Motor neuron (in vitro differentiated cells): ENCODE measurements at regions of chr20 and their contacts with region 1.

Region 1: DNA sequence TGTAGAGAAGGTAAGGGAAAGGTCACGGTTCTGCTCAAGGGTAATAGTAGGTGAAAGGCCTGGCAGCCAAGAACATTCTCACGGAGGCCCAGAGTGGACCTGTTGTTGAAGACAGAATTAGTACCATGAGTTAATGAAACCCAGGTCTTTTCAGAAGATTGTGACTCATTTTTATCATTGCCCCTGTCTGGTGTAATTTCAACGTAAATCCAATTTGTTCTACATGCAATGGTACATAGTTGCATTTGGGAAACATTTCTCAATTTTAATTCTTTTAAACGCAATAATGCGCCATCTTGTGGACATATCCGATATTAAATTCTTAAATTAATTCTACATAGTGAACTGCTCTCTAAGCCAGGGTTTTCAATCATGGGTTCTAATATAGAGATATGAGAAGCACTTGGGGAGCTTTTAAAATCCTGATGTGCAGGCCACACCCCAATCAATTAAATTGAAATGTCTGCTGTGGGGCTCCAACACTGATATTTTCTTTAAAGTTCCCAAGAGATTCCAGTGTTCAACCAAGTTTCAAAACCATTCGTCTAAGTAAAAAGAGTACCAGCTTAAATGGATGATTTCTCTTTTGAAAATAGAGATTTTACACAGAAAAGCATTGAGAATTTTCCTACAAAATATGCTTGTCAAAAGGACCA is 257.4 kb downstream of the PLCB1 start:
- ATAC-seq: peak in 3 of 8 experiments; percentile 22 to 40 (median 36)
- H3K4me3 ChIP-seq: no peak overlapping the region
- H3K27ac ChIP-seq: no peak overlapping the region
- H3K4me1 ChIP-seq: peaks cover 12 to 20% of the 10 kb centered on the region in 2 donors

Region 2: DNA sequence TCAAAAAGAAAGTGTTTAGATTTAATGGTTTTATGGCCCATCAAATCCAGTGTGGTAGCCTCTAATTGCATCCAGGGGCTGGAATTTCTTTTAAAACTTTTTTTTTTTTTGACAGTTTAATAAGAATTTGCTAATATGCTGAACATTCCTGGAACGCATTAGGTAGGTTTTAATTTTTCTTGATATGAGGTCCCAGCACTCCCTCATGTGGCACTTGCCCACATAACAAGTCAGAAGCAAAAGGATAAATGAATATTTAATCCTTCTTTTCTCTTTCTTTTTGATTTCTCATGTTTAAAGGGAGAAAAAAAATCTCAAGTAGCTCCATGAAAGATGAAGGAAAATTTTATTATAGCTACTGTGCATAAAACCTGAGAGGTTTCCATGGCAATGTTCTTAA is 462.7 kb before region 1 on chr20:
- in situ Hi-C with region 1: loop called in 1 of 9 experiments (anchors 25 kb)
- ATAC-seq: peak in 2 of 8 experiments; percentile 29 to 38
- H3K4me3 ChIP-seq: no peak overlapping the region
- H3K27ac ChIP-seq: no peak overlapping the region
- H3K4me1 ChIP-seq: no peaks in the 10 kb centered on the region

Region 3: DNA sequence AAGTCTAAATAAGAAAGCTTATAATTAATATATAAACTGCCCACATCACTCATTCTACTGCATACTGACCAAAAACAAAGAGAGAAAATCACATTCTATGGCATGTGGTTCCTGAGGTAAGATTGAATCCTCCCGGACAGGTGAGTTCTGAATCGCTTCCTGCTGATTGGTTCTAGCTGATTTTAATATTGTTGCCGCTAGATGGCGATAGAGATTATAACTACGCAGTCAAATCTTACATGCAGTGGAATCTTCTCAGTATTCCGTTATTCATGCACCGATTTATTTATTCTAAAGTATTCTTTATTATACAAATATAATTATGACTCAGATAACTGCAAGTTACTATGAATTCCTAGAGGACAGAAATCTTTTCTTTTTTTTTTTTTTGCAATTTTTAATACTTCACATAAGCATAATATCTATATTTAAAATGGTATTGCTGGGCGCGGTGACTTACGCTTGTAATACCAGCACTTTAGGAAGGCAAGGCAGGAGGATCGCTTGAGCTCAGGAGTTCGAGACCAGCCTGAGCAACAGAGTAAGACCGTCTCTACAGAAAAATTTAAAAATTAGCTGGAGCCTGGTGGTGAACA is 345.7 kb before region 1 on chr20:
- in situ Hi-C with region 1: loop called in 1 of 9 experiments (anchors 25 kb)
- ATAC-seq: peak; percentile 43 to 96 (median 62)
- H3K4me3 ChIP-seq: no peak overlapping the region
- H3K27ac ChIP-seq: no peak overlapping the region
- H3K4me1 ChIP-seq: no peaks in the 10 kb centered on the region

Region 4: GRCh38 chr20:8131598-8132483 is 257.7 kb before region 1 on chr20 and contains the start of gene PLCB1:
- in situ Hi-C with region 1: loop called in 2 of 9 experiments (anchors 25 kb)
- ATAC-seq: peak; percentile 89 to 95 (median 92)
- H3K4me3 ChIP-seq: peak within 1 kb of the TSS; percentile 46 to 82 (median 64)
- H3K27ac ChIP-seq: peak within 1 kb of the TSS; percentile 16 to 52
- H3K4me1 ChIP-seq: peaks cover 13 to 34% of the 10 kb centered on the region in 2 donors
- total RNA-seq, gene PLCB1: 7.7 to 65.5 (median 36.2) TPM

Region 5: DNA sequence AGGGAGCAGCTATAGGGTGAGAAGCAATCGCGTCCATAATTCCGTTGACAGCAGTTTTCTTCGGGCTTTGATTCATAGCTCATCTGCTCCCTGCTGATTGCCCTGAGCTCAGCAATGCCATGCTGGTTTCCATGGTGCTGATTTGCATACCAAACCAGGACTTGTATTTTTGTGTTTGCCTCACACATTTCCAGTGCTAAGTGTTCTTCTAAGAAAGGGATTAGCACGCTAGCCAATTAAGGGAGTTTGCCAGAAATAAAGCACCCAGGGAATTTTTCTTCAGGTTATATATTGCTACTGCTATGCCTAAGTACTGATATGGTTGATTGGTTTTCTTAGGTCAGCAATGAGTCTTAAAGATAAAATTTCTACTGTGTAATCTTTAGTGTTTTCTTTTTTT is 79.9 kb before region 1 on chr20:
- in situ Hi-C with region 1: loop called in 1 of 9 experiments (anchors 10 kb)
- ATAC-seq: peak; percentile 49 to 95 (median 92)
- H3K4me3 ChIP-seq: no peak overlapping the region
- H3K27ac ChIP-seq: no peak overlapping the region
- H3K4me1 ChIP-seq: peaks cover 33 to 39% of the 10 kb centered on the region in 2 donors

Region 6: DNA sequence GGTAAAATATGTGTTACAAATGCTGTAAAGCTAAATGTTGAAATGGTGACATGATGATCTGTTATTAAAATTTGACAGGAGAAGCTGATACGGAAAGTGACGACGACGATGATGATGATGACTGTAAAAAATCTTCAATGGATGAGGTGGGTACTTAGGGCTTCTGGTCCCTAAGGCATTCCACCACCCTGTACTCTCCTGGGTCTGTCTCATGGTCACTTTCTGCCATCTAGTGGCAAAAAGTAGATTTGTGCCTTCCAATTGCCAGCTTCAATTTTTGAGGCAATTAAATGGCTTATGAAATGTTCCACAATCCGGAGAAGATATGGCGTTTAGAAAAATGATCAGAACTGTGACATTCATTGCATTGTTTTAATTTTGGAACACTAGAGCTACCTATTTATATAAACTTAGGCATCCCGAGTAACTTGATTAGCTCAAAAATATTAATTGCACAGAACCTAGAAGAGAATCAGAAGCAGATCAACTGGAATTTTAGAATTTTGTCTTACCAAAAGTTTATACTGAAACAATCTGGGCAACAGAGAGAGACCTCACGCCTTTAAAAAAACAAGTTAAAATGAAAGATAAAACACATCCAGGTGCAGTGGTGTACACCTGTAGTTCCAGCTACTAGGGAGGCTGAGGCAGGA is 332.9 kb after region 1 on chr20:
- in situ Hi-C with region 1: loop called in 1 of 9 experiments (anchors 25 kb)
- ATAC-seq: peak; percentile 60 to 87 (median 76)
- H3K4me3 ChIP-seq: no peak overlapping the region
- H3K27ac ChIP-seq: no peak overlapping the region
- H3K4me1 ChIP-seq: no peaks in the 10 kb centered on the region

Region 7: GRCh38 chr20:8782804-8783203 is 393.3 kb after region 1 on chr20:
- in situ Hi-C with region 1: no loop called
- ATAC-seq: no peak
- H3K4me3 ChIP-seq: no peak overlapping the region
- H3K27ac ChIP-seq: no peak overlapping the region
- H3K4me1 ChIP-seq: peaks cover 5 to 7% of the 10 kb centered on the region in 2 donors